K562 (cell line): ENCODE measurements at regions of chr18 and their contacts with region 1.

Region 1: GRCh38 chr18:62982600-62983251 is 267.4 kb downstream of the PHLPP1 start:
- DNase-seq: peak; percentile 38 to 63 (median 46)
- ATAC-seq: peak; percentile 84
- H3K4me3 ChIP-seq: no peak overlapping the region
- H3K27ac ChIP-seq: no peak overlapping the region
- H3K4me1 ChIP-seq: no peaks in the 10 kb centered on the region; a peak in 3 of 5 replicates
- H3K27me3 ChIP-seq: no peaks in the 10 kb centered on the region
- CTCF ChIP-seq: peak; percentile 56 to 74 (median 73)
- EP300 ChIP-seq: no peak
- POLR2A ChIP-seq: no peak
- RAD21 ChIP-seq: peak; percentile 69 to 85

Region 2: GRCh38 chr18:62606106-62606505 is 376.6 kb before region 1 on chr18:
- CTCF ChIA-PET with region 1: no interaction called
- POLR2A ChIA-PET with region 1: interaction called, 3 read pairs
- in situ Hi-C with region 1: loop called (anchors 10 kb)
- intact Hi-C with region 1: no loop called
- DNase-seq: peak in 2 of 4 experiments; percentile 23 to 29
- ATAC-seq: no peak
- H3K4me3 ChIP-seq: no peak overlapping the region
- H3K27ac ChIP-seq: no peak overlapping the region
- H3K4me1 ChIP-seq: peaks cover 6 to 7% of the 10 kb centered on the region in 2 experiments; a peak in 4 of 5 replicates
- H3K27me3 ChIP-seq: peaks cover 0 to 15% of the 10 kb centered on the region in 2 experiments; a peak in 2 of 5 replicates
- CTCF ChIP-seq: no peak
- EP300 ChIP-seq: no peak
- POLR2A ChIP-seq: no peak
- RAD21 ChIP-seq: no peak

Region 3: DNA sequence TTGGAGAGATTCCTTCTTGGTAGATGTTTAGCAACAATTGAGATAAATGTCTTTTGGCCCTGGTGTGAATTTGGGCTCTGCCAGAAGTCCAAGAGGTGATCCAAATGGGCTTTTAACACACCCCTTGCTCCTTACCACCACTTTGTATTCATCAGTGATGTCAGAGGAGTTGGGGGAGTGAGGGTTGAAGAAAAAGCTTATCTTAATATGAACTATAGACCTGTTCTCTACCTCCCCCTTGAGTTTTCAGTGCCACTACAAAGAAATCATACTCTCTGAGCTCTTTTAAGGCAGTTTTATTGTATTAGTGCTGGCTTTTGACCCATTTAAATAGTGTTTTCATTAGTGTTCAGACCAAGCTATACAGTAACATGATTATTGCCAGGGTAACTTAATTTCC is 38.3 kb before region 1 on chr18:
- CTCF ChIA-PET with region 1: no interaction called
- POLR2A ChIA-PET with region 1: no interaction called
- in situ Hi-C with region 1: no loop called
- intact Hi-C with region 1: no loop called
- DNase-seq: peak in 2 of 4 experiments; percentile 6 to 11
- ATAC-seq: peak; percentile 38; the same call in 1 of the 3 replicates
- H3K4me3 ChIP-seq: no peak overlapping the region
- H3K27ac ChIP-seq: no peak overlapping the region
- H3K4me1 ChIP-seq: 0 out of 5 replicates have a peak, but pooled peaks cover 0 to 1% of the 10 kb centered on the region in 2 experiments
- H3K27me3 ChIP-seq: no peaks in the 10 kb centered on the region
- CTCF ChIP-seq: peak in 1 of 3 experiments; percentile 37; a peak in 2 of 6 replicates
- EP300 ChIP-seq: no peak
- POLR2A ChIP-seq: no peak
- RAD21 ChIP-seq: peak in 1 of 2 experiments; percentile 27; a peak in 2 of 4 replicates

Region 4: DNA sequence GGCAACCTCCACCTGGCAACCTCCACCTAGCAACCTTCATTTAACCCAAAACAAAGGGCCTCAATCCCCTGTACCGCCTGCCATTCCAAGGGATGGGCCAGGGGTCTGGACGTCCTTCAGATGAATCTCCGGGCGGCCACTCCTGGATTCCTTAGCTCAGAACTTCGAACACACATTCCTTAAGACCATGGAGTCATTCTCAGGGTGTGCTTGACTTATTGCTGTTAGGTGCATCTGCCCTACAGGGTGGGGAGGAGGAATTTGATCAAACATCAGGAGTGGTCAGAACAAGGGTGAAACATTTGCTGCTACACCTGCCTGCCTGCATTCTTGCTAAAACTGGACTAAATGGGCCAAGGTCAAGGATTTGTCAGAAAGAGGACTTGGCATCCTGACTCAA is 10.2 kb after region 1 on chr18:
- CTCF ChIA-PET with region 1: no interaction called
- POLR2A ChIA-PET with region 1: no interaction called
- in situ Hi-C with region 1: no loop called
- intact Hi-C with region 1: no loop called
- DNase-seq: no peak
- ATAC-seq: no peak
- H3K4me3 ChIP-seq: no peak overlapping the region
- H3K27ac ChIP-seq: no peak overlapping the region
- H3K4me1 ChIP-seq: peaks cover 4 to 14% of the 10 kb centered on the region in 2 experiments; a peak in 4 of 5 replicates
- H3K27me3 ChIP-seq: no peaks in the 10 kb centered on the region
- CTCF ChIP-seq: no peak
- EP300 ChIP-seq: no peak
- POLR2A ChIP-seq: no peak
- RAD21 ChIP-seq: no peak

Region 5: GRCh38 chr18:63025251-63026090 is 42.7 kb after region 1 on chr18:
- CTCF ChIA-PET with region 1: no interaction called
- POLR2A ChIA-PET with region 1: no interaction called
- in situ Hi-C with region 1: no loop called
- intact Hi-C with region 1: no loop called
- DNase-seq: peak in 1 of 4 experiments; percentile 13
- ATAC-seq: peak; percentile 80
- H3K4me3 ChIP-seq: no peak overlapping the region
- H3K27ac ChIP-seq: no peak overlapping the region
- H3K4me1 ChIP-seq: peaks cover 0 to 3% of the 10 kb centered on the region in 2 experiments; a peak in 1 of 5 replicates
- H3K27me3 ChIP-seq: peaks cover 0 to 28% of the 10 kb centered on the region in 2 experiments; a peak in 3 of 5 replicates
- CTCF ChIP-seq: peak; percentile 25 to 36 (median 35); a peak in 3 of 6 replicates
- EP300 ChIP-seq: no peak
- POLR2A ChIP-seq: no peak
- RAD21 ChIP-seq: peak in 1 of 2 experiments; percentile 44; a peak in 1 of 4 replicates

Region 6: GRCh38 chr18:63063171-63063570 is 80.4 kb after region 1 on chr18:
- CTCF ChIA-PET with region 1: no interaction called
- POLR2A ChIA-PET with region 1: no interaction called
- in situ Hi-C with region 1: no loop called
- intact Hi-C with region 1: no loop called
- DNase-seq: no peak
- ATAC-seq: no peak
- H3K4me3 ChIP-seq: no peak overlapping the region
- H3K27ac ChIP-seq: no peak overlapping the region
- H3K4me1 ChIP-seq: no peaks in the 10 kb centered on the region
- H3K27me3 ChIP-seq: peaks cover 3 to 24% of the 10 kb centered on the region in 2 experiments; a peak in 3 of 5 replicates
- CTCF ChIP-seq: no peak
- EP300 ChIP-seq: no peak
- POLR2A ChIP-seq: no peak
- RAD21 ChIP-seq: no peak